Activated CD4-positive, alpha-beta T cell treated with anti-CD3 and anti-CD28 coated beads for 36 hours (primary cell): ENCODE measurements at regions of chr9 and their contacts with region 1.

Region 1: DNA sequence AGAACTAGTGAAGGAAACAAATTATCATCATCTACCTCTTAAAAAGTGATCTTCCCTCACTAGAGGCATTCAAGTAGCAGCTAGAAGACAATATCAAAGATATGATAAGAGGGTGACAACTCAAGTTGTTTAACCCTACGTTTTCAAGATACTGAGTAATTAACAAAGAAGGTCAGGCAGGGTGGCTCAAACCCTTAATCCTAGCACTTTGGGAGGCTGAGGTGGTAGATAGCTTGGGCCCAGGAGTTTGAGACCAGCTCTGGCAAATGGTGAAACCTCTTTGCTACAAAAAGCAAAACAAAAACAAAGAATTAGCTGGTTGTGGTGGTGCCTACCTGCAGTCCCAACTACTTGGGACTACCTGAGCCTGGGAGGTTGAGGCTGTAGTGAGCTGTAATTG is 408.2 kb upstream of the TUSC1 start:
- DNase-seq: no peak
- ATAC-seq: no peak
- H3K4me3 Mint-ChIP-seq: no peak overlapping the region
- H3K27ac Mint-ChIP-seq: no peak overlapping the region
- H3K4me1 Mint-ChIP-seq: no peaks in the 10 kb centered on the region
- H3K27me3 Mint-ChIP-seq: no peaks in the 10 kb centered on the region

Region 2: DNA sequence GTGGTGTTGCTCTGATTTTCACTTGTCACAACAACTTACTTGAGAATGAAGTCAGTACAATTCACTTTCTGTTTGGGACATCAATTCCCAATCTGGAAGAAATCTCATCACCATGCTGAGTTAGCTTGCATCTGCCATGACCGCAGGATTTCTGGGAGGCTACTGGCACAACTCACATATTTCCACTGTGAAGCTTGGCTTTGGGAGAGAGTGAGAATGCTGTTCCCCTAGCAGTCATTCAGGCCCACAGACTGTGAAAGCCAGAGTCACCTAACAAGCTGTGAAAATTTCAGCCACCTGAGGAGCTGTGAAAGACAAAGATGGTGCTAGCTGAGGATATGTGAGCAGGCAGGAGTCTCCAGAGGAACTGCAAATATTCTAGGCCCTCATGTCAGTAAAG is 43.0 kb before region 1 on chr9:
- CTCF ChIA-PET with region 1: no interaction called
- POLR2A ChIA-PET with region 1: no interaction called
- intact Hi-C with region 1: no loop called
- DNase-seq: no peak
- ATAC-seq: no peak
- H3K4me3 Mint-ChIP-seq: no peak overlapping the region
- H3K27ac Mint-ChIP-seq: no peak overlapping the region
- H3K4me1 Mint-ChIP-seq: no peaks in the 10 kb centered on the region
- H3K27me3 Mint-ChIP-seq: no peaks in the 10 kb centered on the region

Region 3: DNA sequence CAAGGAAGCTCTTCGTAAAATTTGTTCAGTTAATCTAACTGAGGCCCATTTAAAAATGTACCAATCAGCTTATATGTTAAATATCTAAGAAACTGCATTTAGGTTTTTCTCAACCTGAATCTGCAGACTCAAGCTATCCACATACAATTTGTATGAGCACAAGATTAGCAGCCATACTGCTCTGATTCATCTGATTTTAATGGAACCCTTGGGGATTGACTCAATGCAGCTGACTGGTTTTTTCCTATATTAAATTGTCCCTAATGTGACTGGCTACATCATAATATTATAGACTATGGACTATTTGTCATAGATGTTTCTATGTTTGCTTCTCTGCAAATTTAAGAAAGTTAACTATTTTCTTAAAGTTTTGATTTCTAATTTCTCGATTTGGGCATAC is 42.8 kb after region 1 on chr9:
- CTCF ChIA-PET with region 1: no interaction called
- POLR2A ChIA-PET with region 1: no interaction called
- intact Hi-C with region 1: loop called in 1 of 2 experiments (anchors 5 kb)
- DNase-seq: no peak
- ATAC-seq: no peak
- H3K4me3 Mint-ChIP-seq: no peak overlapping the region
- H3K27ac Mint-ChIP-seq: no peak overlapping the region
- H3K4me1 Mint-ChIP-seq: no peaks in the 10 kb centered on the region
- H3K27me3 Mint-ChIP-seq: no peaks in the 10 kb centered on the region

Region 4: DNA sequence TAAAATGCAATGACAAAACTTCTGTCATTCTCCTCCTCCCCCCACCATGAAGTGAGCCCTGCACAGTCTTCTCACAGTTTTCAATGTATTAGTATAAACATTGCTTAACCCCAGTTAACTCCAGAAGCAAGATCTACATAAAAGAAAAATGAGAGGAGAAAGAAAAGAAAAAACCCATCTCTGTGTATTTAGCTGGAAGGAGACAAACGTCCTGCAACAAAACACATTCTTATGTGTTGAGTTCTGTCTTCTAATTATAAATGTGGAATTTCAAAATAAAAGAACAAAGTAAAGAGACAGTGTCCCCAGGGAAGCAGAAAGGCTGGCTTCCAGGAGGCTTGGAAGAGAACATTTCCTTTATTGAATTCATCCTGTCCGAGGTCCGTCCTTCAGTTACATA is 83.8 kb after region 1 on chr9:
- CTCF ChIA-PET with region 1: no interaction called
- POLR2A ChIA-PET with region 1: no interaction called
- intact Hi-C with region 1: loop called (anchors 10 kb)
- DNase-seq: no peak
- ATAC-seq: no peak
- H3K4me3 Mint-ChIP-seq: no peak overlapping the region
- H3K27ac Mint-ChIP-seq: no peak overlapping the region
- H3K4me1 Mint-ChIP-seq: no peaks in the 10 kb centered on the region
- H3K27me3 Mint-ChIP-seq: no peaks in the 10 kb centered on the region